AG04449 (cell line): ENCODE measurements at regions of chr1 and their contacts with region 1.

Region 1: GRCh38 chr1:201511941-201512539 is 5.1 kb upstream of the CSRP1 start:
- DNase-seq: no peak
- H3K4me3 ChIP-seq: no peak overlapping the region
- CTCF ChIP-seq: no peak

Region 2: GRCh38 chr1:200217709-200218108 is 1294.3 kb before region 1 on chr1:
- CTCF ChIA-PET with region 1: no interaction called
- POLR2A ChIA-PET with region 1: no interaction called
- DNase-seq: no peak
- H3K4me3 ChIP-seq: no peak overlapping the region
- CTCF ChIP-seq: no peak

Region 3: GRCh38 chr1:201348211-201348566 is 163.9 kb before region 1 on chr1:
- CTCF ChIA-PET with region 1: interaction called, 21 read pairs
- POLR2A ChIA-PET with region 1: no interaction called
- DNase-seq: no peak
- H3K4me3 ChIP-seq: no peak overlapping the region
- CTCF ChIP-seq: peak; percentile 78

Region 4: GRCh38 chr1:201408176-201408833 is 103.7 kb before region 1 on chr1:
- CTCF ChIA-PET with region 1: interaction called, 14 read pairs
- POLR2A ChIA-PET with region 1: no interaction called
- DNase-seq: peak; percentile 10
- H3K4me3 ChIP-seq: no peak overlapping the region
- CTCF ChIP-seq: peak; percentile 99

Region 5: GRCh38 chr1:201447911-201448871 is 63.8 kb before region 1 on chr1:
- CTCF ChIA-PET with region 1: interaction called, 305 read pairs
- POLR2A ChIA-PET with region 1: no interaction called
- DNase-seq: no peak
- H3K4me3 ChIP-seq: no peak overlapping the region
- CTCF ChIP-seq: peak; percentile 90

Region 6: DNA sequence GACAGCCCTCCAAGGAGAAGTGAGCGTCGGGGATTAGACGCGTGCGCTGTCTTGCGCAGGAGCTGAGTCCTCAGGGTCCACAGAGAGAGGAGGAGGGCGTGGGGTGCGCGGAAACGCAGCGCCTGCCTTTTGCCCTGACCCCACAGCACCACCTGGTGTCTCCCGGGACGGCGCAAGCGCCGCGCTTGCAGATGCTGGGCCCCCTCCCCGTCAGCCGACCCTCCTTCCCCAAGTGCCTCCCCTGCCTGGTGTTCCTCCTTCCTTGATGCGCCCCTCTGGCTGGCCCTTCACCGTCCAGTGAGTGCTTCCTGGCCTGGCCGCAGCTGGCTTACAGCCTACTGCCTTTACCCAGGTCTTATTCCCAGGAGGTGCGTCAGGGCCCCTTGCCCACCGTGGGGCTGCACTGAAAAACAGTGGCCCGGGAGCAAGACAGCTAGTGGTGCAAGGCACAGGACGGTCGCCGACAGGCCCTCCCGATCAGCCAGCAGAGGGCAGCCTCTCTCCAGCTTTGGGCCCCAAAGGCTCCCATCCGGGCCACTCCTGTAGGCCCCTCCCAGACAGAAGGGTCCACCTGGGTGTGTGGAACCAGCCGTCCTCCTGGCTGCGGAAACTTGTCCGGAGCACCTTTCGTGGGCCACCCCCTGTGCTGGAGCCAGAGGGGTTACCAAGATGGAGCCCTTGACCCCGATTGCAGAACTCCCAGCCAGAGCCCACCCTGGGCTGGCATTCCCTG is 30.1 kb before region 1 on chr1:
- CTCF ChIA-PET with region 1: interaction called, 1,139 read pairs
- POLR2A ChIA-PET with region 1: interaction called, 11 read pairs
- DNase-seq: no peak
- H3K4me3 ChIP-seq: no peak overlapping the region; the same call in 1 of the 2 replicates
- CTCF ChIP-seq: peak; percentile 93

Region 7: GRCh38 chr1:201538612-201539551 is 26.8 kb after region 1 on chr1 and contains the start of gene NAV1:
- CTCF ChIA-PET with region 1: interaction called, 170 read pairs
- POLR2A ChIA-PET with region 1: interaction called, 3 read pairs
- DNase-seq: no peak
- H3K4me3 ChIP-seq: peak within 1 kb of the TSS; percentile 92
- CTCF ChIP-seq: no peak

Region 8: DNA sequence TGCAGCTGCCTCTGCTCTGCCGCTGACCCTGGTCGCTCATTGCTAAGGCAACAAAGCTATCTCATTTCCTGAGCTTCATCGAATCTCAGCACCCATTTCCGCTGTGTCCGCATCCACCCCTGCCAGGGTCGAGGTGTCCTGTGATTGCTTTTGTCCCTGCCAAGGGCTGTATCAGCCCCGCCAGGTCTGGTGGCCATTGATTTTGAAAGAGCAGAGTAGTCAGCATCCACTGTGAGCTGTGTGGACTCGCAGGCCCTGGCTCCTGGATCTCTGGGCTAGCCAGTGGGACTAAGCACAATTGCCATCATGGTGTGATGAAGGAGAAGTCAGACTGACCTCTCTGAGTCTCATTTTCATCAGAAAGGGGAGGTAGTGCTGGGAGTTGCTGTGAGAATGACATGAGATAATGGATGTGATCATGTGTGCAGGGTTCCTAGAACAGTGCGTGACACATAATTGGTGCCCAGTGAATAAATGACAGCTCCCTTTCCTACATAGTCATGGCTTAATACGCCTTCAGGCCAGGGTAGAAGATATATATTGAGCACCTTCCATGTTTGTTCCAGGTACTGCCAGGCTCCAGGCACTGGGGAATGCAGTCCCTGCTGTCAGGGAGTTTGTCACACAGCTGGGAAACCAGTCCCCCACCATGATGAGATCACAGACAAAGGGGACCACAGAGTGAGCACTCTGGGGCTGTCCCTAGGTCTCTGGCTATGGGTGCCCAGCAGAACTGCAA is 59.0 kb after region 1 on chr1:
- CTCF ChIA-PET with region 1: no interaction called
- POLR2A ChIA-PET with region 1: no interaction called
- DNase-seq: no peak
- H3K4me3 ChIP-seq: no peak overlapping the region
- CTCF ChIP-seq: no peak